Astrocyte of the cerebellum (primary cell): ENCODE measurements at regions of chr1 and their contacts with region 1.

Region 1: DNA sequence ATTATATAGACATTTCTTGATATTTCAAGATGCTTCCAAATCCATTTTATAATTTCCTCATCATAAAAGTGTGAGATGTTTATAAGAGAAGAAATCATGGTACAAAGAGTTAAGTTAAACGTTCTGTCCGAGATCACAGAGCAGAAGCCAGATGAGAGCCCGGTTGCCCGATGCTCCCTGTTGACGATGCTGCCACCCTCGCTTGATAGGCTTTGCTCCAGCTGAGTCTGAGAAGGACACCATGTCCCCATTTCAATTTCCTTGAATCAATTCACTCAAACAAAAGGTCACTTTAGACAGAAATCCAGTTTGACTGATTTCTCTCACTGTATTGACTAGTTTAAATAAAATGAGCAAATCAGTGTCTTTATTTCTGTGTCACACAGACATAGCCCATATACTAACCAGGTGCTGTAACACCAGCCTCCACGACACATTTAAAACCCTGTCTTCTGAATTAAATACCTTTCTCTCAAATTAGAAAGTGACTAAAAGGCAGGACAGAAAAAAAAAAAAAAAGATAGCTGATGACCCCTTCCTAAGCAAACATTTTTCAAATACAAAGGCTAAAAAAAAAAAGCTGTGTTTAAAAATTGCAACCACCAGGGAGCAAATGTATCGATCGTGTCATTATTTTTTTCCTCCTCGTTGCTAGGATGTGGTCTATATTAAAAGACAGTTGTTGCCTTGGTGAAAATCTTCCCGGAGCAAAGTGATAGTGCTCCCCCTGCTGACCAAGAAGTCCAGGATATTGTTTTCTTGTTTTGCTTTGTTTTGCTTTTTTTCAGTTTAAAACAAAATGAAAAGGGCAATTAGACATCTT is 35.2 kb downstream of the DNASE2B start:
- DNase-seq: peak; percentile 68
- H3K4me3 ChIP-seq: no peak overlapping the region
- CTCF ChIP-seq: peak; percentile 71

Region 2: GRCh38 chr1:83910461-83910860 is 523.0 kb before region 1 on chr1:
- in situ Hi-C with region 1: loop called (anchors 5 kb)
- DNase-seq: no peak
- H3K4me3 ChIP-seq: no peak overlapping the region
- CTCF ChIP-seq: no peak

Region 3: DNA sequence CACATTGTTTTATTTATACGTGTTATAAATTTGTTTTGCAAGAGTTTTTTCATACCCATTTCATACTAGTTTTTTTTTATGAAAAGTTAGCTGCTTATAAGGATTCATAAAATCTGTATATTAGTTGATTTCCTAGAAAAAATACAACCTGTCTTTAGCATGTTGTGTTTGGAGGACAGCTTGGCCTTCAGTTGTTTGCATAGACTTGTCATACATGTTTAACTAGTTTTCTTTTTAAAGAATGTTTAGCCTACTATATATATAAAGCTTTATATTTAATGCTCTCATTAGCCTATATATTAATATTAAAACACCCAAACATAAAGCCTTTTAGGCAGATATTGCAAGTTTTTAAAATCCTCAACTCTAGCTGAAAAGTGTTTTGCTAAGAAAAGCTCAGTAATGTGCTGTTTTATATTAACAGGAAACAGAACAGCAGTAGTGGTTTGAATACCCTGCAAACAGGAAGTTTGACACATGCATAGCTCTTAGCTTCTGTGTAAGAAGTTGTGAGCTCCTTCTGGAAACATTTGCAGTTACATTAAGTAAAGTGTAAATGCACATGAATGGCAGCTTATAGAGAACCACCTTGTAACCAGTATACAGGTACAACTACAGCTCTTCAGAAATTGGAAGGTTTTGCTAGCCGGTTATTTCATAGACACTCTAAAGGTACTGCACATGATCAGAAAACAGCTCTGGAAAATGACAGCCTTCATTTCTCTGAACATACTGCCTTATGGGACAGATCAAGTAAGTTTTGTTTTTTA is 289.5 kb before region 1 on chr1 and contains the start of gene PRKACB:
- in situ Hi-C with region 1: loop called (anchors 5 kb)
- DNase-seq: no peak
- H3K4me3 ChIP-seq: no peak within 1 kb of the TSS
- CTCF ChIP-seq: no peak

Region 4: DNA sequence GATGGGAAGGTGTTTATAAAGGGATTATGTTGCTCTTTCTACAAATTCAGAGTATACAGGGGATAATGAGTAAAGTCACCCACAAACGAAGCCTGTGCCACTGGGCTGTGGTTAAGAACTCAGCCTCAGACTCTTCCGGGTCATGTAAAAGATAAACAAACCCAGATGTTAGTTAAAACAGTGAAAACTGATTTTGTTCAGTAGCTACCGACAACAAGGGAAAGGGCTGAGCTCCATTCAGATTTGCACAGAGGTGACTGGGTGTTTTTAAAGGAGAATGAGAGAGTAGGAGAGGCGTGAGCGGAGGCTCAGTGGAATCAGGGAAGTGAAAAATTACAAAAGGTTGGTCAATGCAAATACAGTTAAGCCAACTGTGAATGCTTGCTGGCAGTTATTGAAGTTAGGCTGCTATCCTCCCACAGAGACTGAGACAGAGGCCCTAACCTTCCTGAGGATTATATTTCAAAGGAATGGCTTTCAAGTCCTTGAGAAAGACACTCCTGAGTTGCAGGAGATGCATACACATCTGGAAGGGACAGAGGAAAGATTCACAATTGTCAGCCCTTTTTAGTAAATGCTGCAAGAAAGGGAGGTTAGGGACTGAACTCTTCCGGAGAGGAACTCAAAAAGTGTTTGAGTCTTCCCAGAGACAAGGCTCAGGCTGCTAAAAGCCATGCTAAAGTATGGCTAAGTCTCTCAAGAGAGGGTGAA is 161.9 kb before region 1 on chr1:
- in situ Hi-C with region 1: no loop called
- DNase-seq: peak; percentile 52
- H3K4me3 ChIP-seq: no peak overlapping the region
- CTCF ChIP-seq: no peak

Region 5: DNA sequence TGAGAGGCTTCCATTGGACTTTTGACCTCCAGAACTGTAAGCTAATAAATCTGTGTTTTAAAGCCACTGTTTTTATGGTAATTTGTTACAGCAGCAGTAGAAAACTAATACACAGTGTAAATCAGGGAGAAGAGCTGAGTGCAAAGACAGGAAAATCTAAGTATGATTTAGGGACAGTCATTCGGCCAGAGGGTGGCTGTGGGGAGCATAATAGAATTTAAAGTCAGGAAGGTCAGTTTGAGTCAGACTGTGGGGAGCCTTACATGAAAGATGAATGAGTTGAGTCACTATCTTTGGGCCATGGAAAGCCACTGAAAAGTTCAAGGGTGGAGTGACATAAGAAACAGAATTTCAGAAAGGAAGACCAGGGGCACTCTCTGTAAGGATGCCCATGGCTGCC is 309.2 kb after region 1 on chr1:
- in situ Hi-C with region 1: loop called (anchors 10 kb)
- DNase-seq: no peak
- H3K4me3 ChIP-seq: no peak overlapping the region
- CTCF ChIP-seq: no peak